Gastrocnemius medialis (tissue), 4 donors: ENCODE measurements at regions of chr3 and their contacts with region 1.

Region 1: GRCh38 chr3:25648107-25648535 is 16.6 kb downstream of the TOP2B start:
- DNase-seq: peak; percentile 33 to 55
- ATAC-seq: peak; percentile 80 to 97
- H3K4me3 ChIP-seq: no peak overlapping the region
- H3K27ac ChIP-seq: no peak overlapping the region
- H3K4me1 ChIP-seq: peaks cover 17 to 20% of the 10 kb centered on the region in 2 donors
- H3K27me3 ChIP-seq: no peaks in the 10 kb centered on the region
- CTCF ChIP-seq: peak; percentile 66 to 91 (median 85)
- POLR2A ChIP-seq: no peak

Region 2: GRCh38 chr3:25782938-25783660 is 135.0 kb after region 1 on chr3 and contains the start of gene NGLY1:
- in situ Hi-C with region 1: loop called in 1 of 4 experiments (anchors 10 kb)
- intact Hi-C with region 1: loop called (anchors 5 kb)
- DNase-seq: peak; percentile 78 to 79
- ATAC-seq: peak; percentile 90 to 92
- H3K4me3 ChIP-seq: peak within 1 kb of the TSS; percentile 87 to 97 (median 94)
- H3K27ac ChIP-seq: peak within 1 kb of the TSS; percentile 91 to 97 (median 94)
- H3K4me1 ChIP-seq: peaks cover 15 to 22% of the 10 kb centered on the region in 2 donors
- H3K27me3 ChIP-seq: no peaks in the 10 kb centered on the region
- CTCF ChIP-seq: peak in 3 of 5 experiments; percentile 27 to 56 (median 29)
- POLR2A ChIP-seq: peak; percentile 90 to 94
- total RNA-seq, gene NGLY1: 61.5 to 73.3 (median 68.6) TPM

Region 3: DNA sequence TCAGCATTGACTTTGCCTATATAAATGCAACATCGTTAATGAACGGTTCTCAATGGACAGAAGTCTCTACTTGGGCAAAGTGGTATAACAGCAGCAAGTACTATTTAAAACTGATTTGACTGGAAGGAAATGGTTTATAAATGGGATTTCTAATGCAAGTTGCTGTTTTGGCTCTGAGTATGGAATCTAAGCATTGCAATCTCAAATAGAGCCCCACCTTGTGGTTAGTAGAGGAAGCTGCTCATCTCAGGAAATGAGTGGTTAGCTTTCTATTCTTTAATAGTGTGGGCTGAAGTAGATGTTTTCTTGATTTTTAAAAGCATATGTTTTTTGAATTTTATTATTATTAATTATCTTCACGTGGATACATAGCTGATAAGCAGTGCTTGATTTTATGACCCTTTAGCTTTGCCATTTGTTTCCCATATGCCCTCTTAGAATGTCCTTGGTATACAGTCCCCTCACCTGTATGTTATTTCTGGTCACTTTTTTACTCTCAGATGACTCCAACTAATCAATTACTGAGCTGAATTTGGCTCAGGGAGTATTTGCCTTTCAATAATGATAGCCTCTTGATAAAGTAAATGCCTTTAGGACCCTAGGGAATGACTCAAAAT is 208.9 kb after region 1 on chr3:
- in situ Hi-C with region 1: loop called in 3 of 4 experiments (anchors 5 to 25 kb)
- intact Hi-C with region 1: loop called (anchors 1 kb)
- DNase-seq: no peak
- ATAC-seq: no peak
- H3K4me3 ChIP-seq: no peak overlapping the region
- H3K27ac ChIP-seq: no peak overlapping the region
- H3K4me1 ChIP-seq: no peaks in the 10 kb centered on the region
- H3K27me3 ChIP-seq: no peaks in the 10 kb centered on the region
- CTCF ChIP-seq: peak in 4 of 5 experiments; percentile 37 to 60 (median 52)
- POLR2A ChIP-seq: no peak